ENCODE measurements at regions of chr10 and their contacts with region 1.

Region 1: GRCh38 chr10:110016039-110016438 is 8.3 kb downstream of the ADD3 start:
- DNase-seq: no peak
- H3K4me3 Mint-ChIP-seq: no peak overlapping the region
- H3K27ac Mint-ChIP-seq: no peak overlapping the region
- H3K4me1 Mint-ChIP-seq: peaks cover 80% of the 10 kb centered on the region
- H3K27me3 Mint-ChIP-seq: no peaks in the 10 kb centered on the region

Region 2: GRCh38 chr10:109978481-109978880 is 37.6 kb before region 1 on chr10:
- CTCF ChIA-PET with region 1: interaction called, 20 read pairs
- DNase-seq: peak; percentile 77
- H3K4me3 Mint-ChIP-seq: no peak overlapping the region
- H3K27ac Mint-ChIP-seq: no peak overlapping the region
- H3K4me1 Mint-ChIP-seq: peaks cover 8% of the 10 kb centered on the region
- H3K27me3 Mint-ChIP-seq: peaks cover 6% of the 10 kb centered on the region

Measured in activated naive CD4-positive, alpha-beta T cell treated with anti-CD3 and anti-CD28 coated beads, Interleukin-2, amount 10 ng/mL, durations not matched to agents 7 days and 5 days (primary cell).